ENCODE measurements at regions of chr19 and their contacts with region 1.

Region 1: GRCh38 chr19:1441677-1442438 is 3.7 kb downstream of the RPS15 start:
- DNase-seq: no peak

Region 2: DNA sequence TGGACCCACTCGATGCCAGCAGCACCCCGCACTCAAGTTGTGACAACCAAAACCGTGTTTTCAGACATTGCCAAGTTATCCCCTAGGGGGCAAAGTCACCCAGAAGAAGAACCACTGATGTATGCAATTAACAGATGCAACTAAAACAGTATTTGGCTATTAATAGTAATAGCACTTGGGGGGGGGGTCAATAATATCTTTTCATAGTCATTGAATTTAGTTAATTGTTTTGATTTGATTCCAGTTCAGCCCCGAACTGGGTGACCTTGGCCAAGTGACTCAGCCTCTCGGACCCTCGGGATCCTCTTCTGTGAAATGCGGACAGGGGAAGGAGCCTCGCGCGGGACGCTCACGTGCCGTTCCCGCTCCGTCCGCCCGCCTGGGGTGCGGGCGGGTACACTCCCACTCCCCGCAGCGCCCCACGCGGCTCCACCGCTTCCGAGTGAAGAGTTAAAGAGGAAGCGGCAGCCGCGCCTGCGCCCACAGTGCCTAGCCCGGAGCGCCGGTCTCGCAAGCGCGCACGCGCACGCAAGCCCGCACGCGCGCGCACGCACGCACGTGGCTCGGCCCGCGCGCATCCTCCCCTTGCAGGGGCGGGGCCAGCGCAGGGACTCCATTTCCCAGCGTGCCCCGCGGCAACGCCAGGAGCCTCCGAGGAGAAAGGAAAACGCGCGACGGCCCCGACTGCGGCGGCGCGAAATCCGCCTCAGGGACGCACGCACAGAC is 34.9 kb before region 1 on chr19:
- intact Hi-C with region 1: loop called (anchors 5 kb)
- DNase-seq: peak; percentile 94 to 100 (median 99)

Region 3: DNA sequence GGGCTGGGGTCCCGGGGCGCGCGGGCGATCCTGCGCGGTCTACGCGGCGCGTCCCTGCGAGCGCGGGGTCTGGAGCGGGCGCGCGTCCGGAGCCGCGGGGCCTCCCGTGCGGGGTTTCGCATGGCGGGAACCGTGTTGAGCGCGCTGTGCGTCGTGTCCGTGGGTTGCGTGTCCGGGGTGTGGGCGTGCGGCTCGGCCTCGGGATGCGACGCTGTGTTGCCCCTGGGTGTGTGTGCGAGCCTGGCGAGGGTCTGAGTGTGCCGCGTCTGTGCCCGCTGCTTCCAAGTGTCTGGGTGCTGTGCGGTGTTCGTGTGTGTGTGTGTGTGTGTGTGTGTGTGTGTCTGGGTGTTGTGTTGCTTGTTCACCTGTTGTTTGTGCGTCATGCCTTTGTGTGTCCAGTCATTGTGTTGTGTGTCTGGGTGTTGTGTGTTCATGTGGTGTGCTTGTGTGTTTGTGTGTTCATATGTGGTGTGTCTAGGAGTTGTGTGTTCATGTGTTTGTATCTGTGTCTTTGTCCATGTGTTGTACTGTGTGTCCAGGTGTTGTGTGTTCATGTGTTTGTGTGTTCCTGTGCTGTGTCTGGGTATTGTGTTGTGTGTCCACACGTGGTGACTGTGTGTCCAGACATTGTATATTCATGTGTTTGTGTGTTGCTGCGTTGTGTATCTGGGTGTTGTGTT is 82.6 kb after region 1 on chr19:
- intact Hi-C with region 1: no loop called
- DNase-seq: no peak

Region 4: DNA sequence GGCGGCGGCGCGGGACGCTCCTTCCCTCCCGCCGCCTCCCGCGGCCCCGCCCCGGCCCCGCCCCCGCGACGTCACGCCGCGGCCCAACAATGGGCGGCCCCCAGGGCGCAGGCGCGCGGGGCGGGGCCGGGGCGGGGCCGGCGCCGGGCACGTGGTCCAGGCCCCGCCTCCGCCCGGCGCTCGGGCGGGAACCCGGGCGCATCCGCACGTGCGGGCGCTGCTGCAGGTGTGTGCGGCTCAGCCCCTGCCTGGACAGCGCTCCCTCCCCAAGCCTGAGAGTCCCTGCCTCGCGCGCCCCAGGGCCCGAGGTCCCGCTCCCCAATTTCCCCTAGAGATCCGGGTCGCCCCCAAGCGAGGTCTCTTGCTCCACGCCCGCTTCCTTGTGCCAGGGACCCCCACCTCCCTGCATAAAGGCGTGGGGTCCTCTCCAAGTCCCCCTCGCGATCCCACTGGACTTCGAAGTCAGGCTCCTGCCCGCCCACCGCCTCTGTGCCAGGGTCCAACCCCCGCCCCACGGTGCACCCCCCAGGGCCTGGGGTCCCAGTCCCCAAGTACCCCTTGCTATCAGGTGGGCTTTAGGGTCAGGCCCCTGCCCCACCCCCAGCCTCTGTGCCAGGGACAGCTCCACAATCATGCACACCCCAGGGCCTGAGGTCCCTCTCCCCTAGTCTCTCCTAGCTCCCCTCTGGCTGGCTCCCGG is 126.6 kb after region 1 on chr19 and contains the start of gene MEX3D:
- intact Hi-C with region 1: no loop called
- DNase-seq: peak in 41 of 42 donors; percentile 14 to 86 (median 67)